A549 (cell line): ENCODE measurements at regions of chr19 and their contacts with region 1.

Region 1: GRCh38 chr19:14347999-14348889 is 33.0 kb upstream of the ADGRE5 start:
- DNase-seq: peak; percentile 50 to 76
- ATAC-seq: peak; percentile 90
- H3K4me3 ChIP-seq: peak overlapping the region; percentile 31; the same call in 2 of the 3 replicates
- H3K27ac ChIP-seq: peak overlapping the region; percentile 73
- H3K4me1 ChIP-seq: 0 out of 3 replicates have a peak, but pooled peaks cover 1% of the 10 kb centered on the region
- CTCF ChIP-seq: peak; percentile 93
- EP300 ChIP-seq: no peak
- POLR2A ChIP-seq: no peak
- RAD21 ChIP-seq: peak; percentile 92 to 93

Region 2: GRCh38 chr19:14147797-14148605 is 200.2 kb before region 1 on chr19:
- CTCF ChIA-PET with region 1: interaction called, 19 read pairs
- POLR2A ChIA-PET with region 1: no interaction called
- DNase-seq: peak; percentile 45 to 73
- ATAC-seq: peak; percentile 86 to 95
- H3K4me3 ChIP-seq: no peak overlapping the region
- H3K27ac ChIP-seq: peak overlapping the region in 1 of 2 experiments; percentile 57; a peak in 2 of 6 replicates
- H3K4me1 ChIP-seq: no peaks in the 10 kb centered on the region
- CTCF ChIP-seq: peak; percentile 49; the same call in 2 of the 3 replicates
- EP300 ChIP-seq: no peak
- POLR2A ChIP-seq: no peak
- RAD21 ChIP-seq: peak; percentile 53 to 58

Region 3: GRCh38 chr19:14198384-14199376 is 149.6 kb before region 1 on chr19:
- CTCF ChIA-PET with region 1: interaction called, 202 read pairs
- POLR2A ChIA-PET with region 1: no interaction called
- DNase-seq: peak in 1 of 2 experiments; percentile 29
- ATAC-seq: no peak
- H3K4me3 ChIP-seq: no peak overlapping the region
- H3K27ac ChIP-seq: no peak overlapping the region; a peak in 1 of 6 replicates
- H3K4me1 ChIP-seq: no peaks in the 10 kb centered on the region
- CTCF ChIP-seq: no peak
- EP300 ChIP-seq: no peak
- POLR2A ChIP-seq: no peak
- RAD21 ChIP-seq: no peak

Region 4: DNA sequence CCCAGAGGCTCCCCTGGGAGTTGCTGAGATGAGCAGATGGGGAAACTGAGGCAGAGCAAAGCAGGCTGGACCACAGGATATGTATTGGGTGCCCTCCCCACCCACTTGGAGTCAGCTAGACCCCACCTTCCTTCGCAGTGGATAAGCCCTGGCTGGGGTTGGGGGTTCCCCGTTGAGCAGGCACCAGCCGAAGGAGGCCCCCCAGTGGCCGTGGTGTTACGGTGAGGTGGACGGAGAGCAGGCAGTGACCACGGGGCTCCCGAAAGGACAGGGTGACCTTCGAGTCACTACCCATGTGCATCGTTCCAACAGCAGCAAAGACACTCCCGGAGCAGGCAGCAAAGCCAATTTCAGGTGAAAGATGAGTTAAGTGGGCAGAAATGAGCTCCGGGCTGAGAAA is 29.4 kb before region 1 on chr19:
- CTCF ChIA-PET with region 1: interaction called, 18 read pairs
- POLR2A ChIA-PET with region 1: no interaction called
- DNase-seq: no peak
- ATAC-seq: peak; percentile 43 to 56; a peak in 4 of 6 replicates
- H3K4me3 ChIP-seq: no peak overlapping the region
- H3K27ac ChIP-seq: no peak overlapping the region
- H3K4me1 ChIP-seq: no peaks in the 10 kb centered on the region
- CTCF ChIP-seq: no peak
- EP300 ChIP-seq: no peak
- POLR2A ChIP-seq: no peak
- RAD21 ChIP-seq: no peak

Region 5: GRCh38 chr19:14366498-14366915 is 18.3 kb after region 1 on chr19:
- CTCF ChIA-PET with region 1: interaction called, 41 read pairs
- POLR2A ChIA-PET with region 1: no interaction called
- DNase-seq: peak in 1 of 2 experiments; percentile 84
- ATAC-seq: peak in 1 of 2 experiments; percentile 54; a peak in 3 of 6 replicates
- H3K4me3 ChIP-seq: no peak overlapping the region
- H3K27ac ChIP-seq: no peak overlapping the region
- H3K4me1 ChIP-seq: peaks cover 13% of the 10 kb centered on the region; the same call in 1 of the 3 replicates
- CTCF ChIP-seq: no peak
- EP300 ChIP-seq: no peak
- POLR2A ChIP-seq: no peak
- RAD21 ChIP-seq: no peak